ENCODE measurements at regions of chr11 and their contacts with region 1.

Region 1: GRCh38 chr11:13343931-13344717 is 66.5 kb downstream of the BMAL1 start:
- DNase-seq: peak; percentile 87
- ATAC-seq: peak; percentile 71
- H3K4me3 Mint-ChIP-seq: no peak overlapping the region
- H3K27ac Mint-ChIP-seq: no peak overlapping the region
- H3K4me1 Mint-ChIP-seq: peaks cover 34% of the 10 kb centered on the region
- H3K27me3 Mint-ChIP-seq: no peaks in the 10 kb centered on the region
- CTCF ChIP-seq: peak; percentile 82

Region 2: DNA sequence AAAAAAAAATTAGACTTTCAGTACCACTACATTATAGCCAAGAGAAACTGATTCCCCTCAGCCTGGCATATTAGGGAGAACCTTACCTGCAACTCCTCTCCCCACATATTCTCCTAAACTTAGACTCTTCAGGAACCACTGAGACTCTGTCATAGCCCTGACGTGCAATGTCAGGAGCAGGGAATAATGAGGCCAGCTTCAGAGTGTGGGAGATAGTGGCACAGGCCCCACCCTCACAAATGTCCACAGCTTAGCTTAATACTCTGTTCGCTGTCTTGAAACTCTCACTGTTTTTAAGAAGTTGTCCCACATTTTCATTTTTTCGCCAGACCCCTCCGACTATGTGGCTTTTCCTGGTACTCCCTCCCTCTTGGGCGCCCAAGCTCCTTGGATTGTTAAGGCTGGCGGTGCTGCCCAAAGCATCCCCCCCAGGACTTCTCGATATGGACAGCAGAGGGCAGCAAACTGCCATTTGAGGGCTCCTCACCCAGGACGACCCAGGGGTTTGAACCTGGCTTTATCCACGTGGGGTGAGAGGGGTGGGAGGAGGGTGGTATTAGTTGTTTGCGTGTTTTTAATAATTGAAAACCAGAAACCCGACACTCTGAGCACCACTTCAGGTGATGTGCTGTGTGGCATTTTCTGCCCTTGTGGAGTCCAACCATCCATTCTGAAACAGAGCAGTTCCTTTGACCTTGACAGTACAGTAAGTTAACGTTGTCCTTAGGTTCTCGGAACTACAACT is 380.2 kb before region 1 on chr11:
- CTCF ChIA-PET with region 1: interaction called, 9 read pairs
- POLR2A ChIA-PET with region 1: no interaction called
- intact Hi-C with region 1: loop called (anchors 10 kb)
- DNase-seq: peak; percentile 70
- ATAC-seq: peak; percentile 72
- H3K4me3 Mint-ChIP-seq: no peak overlapping the region
- H3K27ac Mint-ChIP-seq: no peak overlapping the region
- H3K4me1 Mint-ChIP-seq: no peaks in the 10 kb centered on the region
- H3K27me3 Mint-ChIP-seq: peaks cover 12% of the 10 kb centered on the region
- CTCF ChIP-seq: peak; percentile 76

Region 3: GRCh38 chr11:13210424-13210823 is 133.7 kb before region 1 on chr11:
- CTCF ChIA-PET with region 1: interaction called, 53 read pairs
- POLR2A ChIA-PET with region 1: no interaction called
- intact Hi-C with region 1: loop called (anchors 5 kb)
- DNase-seq: peak; percentile 59
- ATAC-seq: no peak
- H3K4me3 Mint-ChIP-seq: no peak overlapping the region
- H3K27ac Mint-ChIP-seq: no peak overlapping the region
- H3K4me1 Mint-ChIP-seq: peaks cover 30% of the 10 kb centered on the region
- H3K27me3 Mint-ChIP-seq: no peaks in the 10 kb centered on the region
- CTCF ChIP-seq: peak; percentile 47

Region 4: GRCh38 chr11:13249996-13250395 is 94.1 kb before region 1 on chr11:
- CTCF ChIA-PET with region 1: interaction called, 33 read pairs
- POLR2A ChIA-PET with region 1: no interaction called
- intact Hi-C with region 1: loop called (anchors 10 kb)
- DNase-seq: peak; percentile 13
- ATAC-seq: no peak
- H3K4me3 Mint-ChIP-seq: no peak overlapping the region
- H3K27ac Mint-ChIP-seq: no peak overlapping the region
- H3K4me1 Mint-ChIP-seq: no peaks in the 10 kb centered on the region
- H3K27me3 Mint-ChIP-seq: peaks cover 14% of the 10 kb centered on the region
- CTCF ChIP-seq: no peak

Region 5: GRCh38 chr11:13276832-13277767 is 67.0 kb before region 1 on chr11:
- CTCF ChIA-PET with region 1: interaction called, 10 read pairs
- POLR2A ChIA-PET with region 1: interaction called, 4 read pairs
- intact Hi-C with region 1: no loop called
- DNase-seq: peak; percentile 95
- ATAC-seq: peak; percentile 88
- H3K4me3 Mint-ChIP-seq: peak overlapping the region; percentile 93
- H3K27ac Mint-ChIP-seq: peak overlapping the region; percentile 85
- H3K4me1 Mint-ChIP-seq: peaks cover 43% of the 10 kb centered on the region
- H3K27me3 Mint-ChIP-seq: peaks cover 6% of the 10 kb centered on the region
- CTCF ChIP-seq: no peak

Region 6: DNA sequence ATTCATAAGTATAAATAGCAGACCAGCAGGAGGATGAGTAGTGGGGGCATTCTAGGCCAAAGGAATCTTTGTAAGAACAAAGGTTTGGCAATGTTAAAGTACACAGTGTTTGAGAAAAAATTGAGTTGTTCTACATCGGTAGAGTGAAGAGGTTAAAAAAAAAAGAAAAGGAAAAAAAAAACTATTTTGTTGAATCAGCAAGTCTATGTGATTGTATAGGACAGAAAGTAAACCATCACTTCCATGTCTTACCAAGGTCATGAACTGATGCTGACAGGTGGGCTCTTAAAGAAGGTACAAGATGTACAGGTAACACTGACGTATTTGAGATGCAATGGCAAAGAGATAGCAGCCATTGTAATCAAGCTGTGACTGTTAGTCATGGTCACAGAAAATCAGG is 181.1 kb after region 1 on chr11:
- CTCF ChIA-PET with region 1: no interaction called
- POLR2A ChIA-PET with region 1: no interaction called
- intact Hi-C with region 1: no loop called
- DNase-seq: no peak
- ATAC-seq: no peak
- H3K4me3 Mint-ChIP-seq: no peak overlapping the region
- H3K27ac Mint-ChIP-seq: no peak overlapping the region
- H3K4me1 Mint-ChIP-seq: no peaks in the 10 kb centered on the region
- H3K27me3 Mint-ChIP-seq: peaks cover 4% of the 10 kb centered on the region
- CTCF ChIP-seq: no peak